Activated CD4-positive, alpha-beta memory T cell treated with anti-CD3 and anti-CD28 coated beads, Interleukin-2, amount 10 ng/mL, durations not matched to agents 7 days and 5 days (primary cell): ENCODE measurements at regions of chr3 and their contacts with region 1.

Region 1: GRCh38 chr3:37974121-37975083 is 16.2 kb upstream of the VILL start:
- DNase-seq: peak; percentile 76
- H3K4me3 Mint-ChIP-seq: no peak overlapping the region
- H3K27ac Mint-ChIP-seq: no peak overlapping the region
- H3K4me1 Mint-ChIP-seq: peaks cover 6% of the 10 kb centered on the region
- H3K27me3 Mint-ChIP-seq: no peaks in the 10 kb centered on the region

Region 2: DNA sequence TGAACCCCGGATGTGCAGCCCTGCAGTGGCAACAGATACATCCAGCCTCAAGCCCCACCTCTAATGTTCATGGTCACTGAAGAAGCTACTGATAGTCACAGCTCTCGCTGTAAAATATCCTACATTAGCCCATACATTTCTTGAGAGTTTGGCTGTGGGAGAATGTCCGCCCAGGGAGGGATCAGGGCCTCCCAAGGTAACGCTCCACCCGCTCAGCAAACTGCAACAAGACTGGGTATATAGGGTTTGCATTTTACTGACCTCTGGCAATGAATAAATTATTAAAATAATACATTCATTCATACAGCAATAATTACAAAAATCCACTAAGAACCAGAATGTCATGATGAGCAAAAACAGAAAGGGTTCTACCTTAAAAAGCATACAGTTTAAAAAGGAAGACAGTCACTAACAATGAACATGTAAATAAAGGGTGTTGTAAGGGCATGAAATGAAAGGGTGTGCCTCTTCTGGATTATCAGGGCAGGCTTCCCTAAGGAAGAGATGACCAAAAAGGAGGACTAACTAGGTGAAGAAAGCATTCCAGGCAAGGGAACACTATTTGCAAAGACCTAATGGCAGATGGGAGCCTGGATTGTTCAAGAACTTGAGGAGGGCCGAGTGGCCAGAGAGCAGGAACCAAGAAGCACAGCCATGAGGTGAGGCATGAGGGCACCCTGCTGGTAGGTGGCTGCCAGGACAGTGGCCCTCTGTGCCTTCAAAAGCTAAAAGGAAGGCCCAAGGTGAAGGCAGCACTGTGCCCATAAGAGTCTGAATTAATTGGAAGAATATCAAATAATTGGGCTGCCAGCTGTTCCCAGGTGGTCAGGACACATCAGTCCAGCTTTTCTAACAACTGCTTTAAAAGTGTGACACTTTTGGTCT is 140.9 kb before region 1 on chr3:
- CTCF ChIA-PET with region 1: no interaction called
- POLR2A ChIA-PET with region 1: no interaction called
- DNase-seq: no peak
- H3K4me3 Mint-ChIP-seq: no peak overlapping the region
- H3K27ac Mint-ChIP-seq: no peak overlapping the region
- H3K4me1 Mint-ChIP-seq: no peaks in the 10 kb centered on the region
- H3K27me3 Mint-ChIP-seq: peaks cover 7% of the 10 kb centered on the region

Region 3: DNA sequence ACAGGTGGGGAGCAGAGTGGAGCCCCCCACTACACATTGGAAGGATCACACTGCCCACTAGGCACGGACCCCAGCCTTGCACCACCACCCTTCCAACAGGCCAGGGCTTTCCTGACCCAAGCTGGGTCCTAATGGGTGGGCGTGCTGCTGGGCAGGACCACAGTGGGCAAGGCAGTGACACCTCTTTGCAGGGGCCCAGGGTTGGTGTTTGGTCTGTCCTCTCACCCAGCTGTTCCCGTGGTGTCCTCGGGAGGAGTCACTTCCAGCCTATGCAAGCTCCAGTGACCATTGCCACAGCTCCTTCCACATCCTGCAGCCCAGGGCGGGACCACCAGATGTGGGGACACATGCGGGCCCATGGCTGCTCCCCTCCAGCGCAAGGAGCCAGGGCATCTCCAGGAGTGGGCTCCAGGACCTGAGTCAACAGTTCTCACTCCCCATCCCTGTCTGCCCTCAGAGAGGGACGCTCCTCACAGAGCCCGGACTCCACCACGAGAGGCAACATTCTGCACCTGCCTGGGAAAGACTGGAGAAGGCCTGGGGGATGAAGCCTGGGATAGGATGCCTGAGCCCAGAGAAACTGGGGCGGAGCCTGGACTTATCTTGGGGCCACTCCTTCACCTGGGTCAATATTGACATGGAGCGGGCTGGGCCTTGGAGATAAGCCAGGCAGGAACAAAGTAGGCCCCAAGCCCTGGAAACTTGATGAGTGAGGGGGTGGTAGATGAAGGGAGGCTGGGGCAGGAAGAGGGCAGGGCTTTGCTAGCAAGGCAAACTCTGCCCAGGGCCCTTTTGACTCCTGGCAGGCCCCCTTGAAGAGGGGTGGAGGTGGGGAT is 12.3 kb after region 1 on chr3:
- CTCF ChIA-PET with region 1: interaction called, 14 read pairs
- POLR2A ChIA-PET with region 1: no interaction called
- DNase-seq: no peak
- H3K4me3 Mint-ChIP-seq: no peak overlapping the region
- H3K27ac Mint-ChIP-seq: no peak overlapping the region
- H3K4me1 Mint-ChIP-seq: no peaks in the 10 kb centered on the region
- H3K27me3 Mint-ChIP-seq: peaks cover 2% of the 10 kb centered on the region

Region 4: DNA sequence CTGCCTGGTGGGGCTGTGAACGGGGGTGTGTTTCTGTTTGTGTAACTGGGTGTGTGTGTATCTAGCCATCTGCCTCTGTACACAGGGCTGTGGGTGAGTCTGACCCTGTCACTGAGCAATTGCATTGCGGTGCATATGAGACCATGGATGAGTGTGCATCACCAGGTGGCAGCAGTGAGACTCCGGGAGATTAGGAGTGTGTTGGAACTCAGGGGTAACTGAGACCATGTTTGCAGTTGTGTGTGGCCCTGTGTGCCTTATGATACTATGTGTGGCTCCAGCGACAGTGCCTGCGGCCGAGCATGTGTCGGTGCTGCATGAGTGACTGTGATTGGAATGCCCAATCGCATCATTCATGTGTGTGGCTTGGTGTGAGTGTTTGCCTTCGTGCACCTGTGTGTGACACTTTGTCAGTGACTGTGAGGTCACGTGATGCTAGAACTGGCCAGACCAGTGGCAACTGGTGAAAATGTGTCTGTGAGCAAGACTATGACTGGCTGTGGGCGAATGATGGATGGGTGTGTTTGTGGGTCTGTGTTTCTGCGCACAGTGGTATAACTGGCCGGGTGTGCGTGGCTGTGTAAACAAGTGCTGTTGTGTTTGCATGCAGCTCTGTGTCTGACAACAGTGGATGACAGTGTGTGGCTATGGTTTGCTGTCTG is 30.1 kb after region 1 on chr3:
- CTCF ChIA-PET with region 1: interaction called, 23 read pairs
- POLR2A ChIA-PET with region 1: no interaction called
- DNase-seq: peak; percentile 71
- H3K4me3 Mint-ChIP-seq: no peak overlapping the region
- H3K27ac Mint-ChIP-seq: peak overlapping the region; percentile 54
- H3K4me1 Mint-ChIP-seq: peaks cover 16% of the 10 kb centered on the region
- H3K27me3 Mint-ChIP-seq: no peaks in the 10 kb centered on the region

Region 5: GRCh38 chr3:38039101-38039898 is 64.9 kb after region 1 on chr3 and contains the start of gene DLEC1:
- CTCF ChIA-PET with region 1: interaction called, 14 read pairs
- POLR2A ChIA-PET with region 1: no interaction called
- DNase-seq: peak; percentile 94
- H3K4me3 Mint-ChIP-seq: peak within 1 kb of the TSS; percentile 54
- H3K27ac Mint-ChIP-seq: peak within 1 kb of the TSS; percentile 98
- H3K4me1 Mint-ChIP-seq: peaks cover 37% of the 10 kb centered on the region
- H3K27me3 Mint-ChIP-seq: no peaks in the 10 kb centered on the region
- total RNA-seq, gene DLEC1: 3.8 to 4.2 TPM

Region 6: GRCh38 chr3:38154033-38154494 is 179.7 kb after region 1 on chr3:
- CTCF ChIA-PET with region 1: no interaction called
- POLR2A ChIA-PET with region 1: no interaction called
- DNase-seq: no peak
- H3K4me3 Mint-ChIP-seq: no peak overlapping the region
- H3K27ac Mint-ChIP-seq: no peak overlapping the region
- H3K4me1 Mint-ChIP-seq: peaks cover 54% of the 10 kb centered on the region
- H3K27me3 Mint-ChIP-seq: no peaks in the 10 kb centered on the region